HCT116 (cell line): ENCODE measurements at regions of chr2 and their contacts with region 1.

Region 1: GRCh38 chr2:144560251-144560650 is 40.3 kb upstream of the ZEB2 start:
- DNase-seq: no peak
- ATAC-seq: no peak
- H3K4me3 ChIP-seq: no peak overlapping the region
- H3K27ac ChIP-seq: no peak overlapping the region
- H3K4me1 ChIP-seq: no peaks in the 10 kb centered on the region
- H3K27me3 ChIP-seq: no peaks in the 10 kb centered on the region
- CTCF ChIP-seq: no peak
- POLR2A ChIP-seq: no peak
- RAD21 ChIP-seq: no peak

Region 2: DNA sequence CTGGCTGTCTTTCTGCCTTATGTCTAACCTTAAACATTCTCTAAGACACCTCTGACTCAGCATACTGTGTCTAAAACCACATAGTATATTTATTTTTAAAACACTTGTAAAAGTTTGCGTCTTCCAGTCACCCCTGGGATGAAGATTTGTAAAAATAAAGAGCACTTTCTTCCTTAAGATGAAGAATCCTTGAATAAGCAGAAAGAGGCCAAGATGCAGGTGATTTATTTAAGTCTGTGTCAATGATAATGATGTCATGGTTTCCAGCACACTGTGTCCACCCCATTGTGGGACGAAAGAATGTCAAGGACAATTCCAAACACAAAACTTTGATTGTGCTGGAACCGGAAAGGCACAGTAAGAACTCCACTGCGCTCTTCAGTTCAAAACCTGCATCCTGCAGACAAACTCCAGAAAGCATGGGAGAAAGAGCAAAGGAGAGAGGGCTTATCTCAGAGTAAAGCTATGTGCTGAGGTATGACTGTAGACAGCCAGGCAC is 133.2 kb before region 1 on chr2:
- CTCF ChIA-PET with region 1: no interaction called
- POLR2A ChIA-PET with region 1: no interaction called
- RAD21 ChIA-PET with region 1: no interaction called
- intact Hi-C with region 1: loop called (anchors 5 kb)
- DNase-seq: no peak
- ATAC-seq: no peak
- H3K4me3 ChIP-seq: no peak overlapping the region
- H3K27ac ChIP-seq: no peak overlapping the region
- H3K4me1 ChIP-seq: no peaks in the 10 kb centered on the region
- H3K27me3 ChIP-seq: no peaks in the 10 kb centered on the region
- CTCF ChIP-seq: no peak
- POLR2A ChIP-seq: no peak
- RAD21 ChIP-seq: no peak